ENCODE measurements at regions of chr5 and their contacts with region 1.

Region 1: DNA sequence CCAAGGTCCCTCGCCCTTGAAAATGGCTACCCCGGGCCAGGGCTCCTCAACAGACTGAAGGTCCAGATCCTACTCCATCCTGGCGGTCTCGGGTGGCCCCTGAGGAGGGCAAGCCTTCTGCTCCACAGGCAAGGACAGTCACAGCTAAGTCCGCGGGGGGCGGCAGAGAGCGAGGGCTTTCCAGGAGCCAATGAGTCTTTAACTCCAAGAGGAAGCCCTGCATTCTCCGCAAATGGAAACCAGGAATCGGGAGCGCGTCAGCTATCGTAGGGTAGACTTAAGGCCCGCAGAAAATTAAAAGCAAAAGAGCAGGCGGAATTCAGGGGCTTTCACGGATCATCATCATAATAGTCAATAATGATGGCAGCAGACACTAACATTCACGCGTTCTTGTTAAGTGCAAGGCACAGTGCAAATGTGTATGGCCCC is 87.8 kb upstream of the TNFAIP8 start:
- DNase-seq: peak; percentile 62
- ATAC-seq: peak; percentile 65
- H3K4me3 Mint-ChIP-seq: peak overlapping the region; percentile 95
- H3K27ac Mint-ChIP-seq: peak overlapping the region; percentile 95
- H3K4me1 Mint-ChIP-seq: peaks cover 50% of the 10 kb centered on the region
- H3K27me3 Mint-ChIP-seq: no peaks in the 10 kb centered on the region
- CTCF ChIP-seq: no peak

Region 2: GRCh38 chr5:119282628-119283027 is 14.7 kb after region 1 on chr5:
- CTCF ChIA-PET with region 1: no interaction called
- POLR2A ChIA-PET with region 1: interaction called, 54 read pairs
- intact Hi-C with region 1: loop called (anchors 2 kb)
- DNase-seq: no peak
- ATAC-seq: no peak
- H3K4me3 Mint-ChIP-seq: no peak overlapping the region
- H3K27ac Mint-ChIP-seq: peak overlapping the region; percentile 51
- H3K4me1 Mint-ChIP-seq: peaks cover 100% of the 10 kb centered on the region
- H3K27me3 Mint-ChIP-seq: no peaks in the 10 kb centered on the region
- CTCF ChIP-seq: no peak

Region 3: DNA sequence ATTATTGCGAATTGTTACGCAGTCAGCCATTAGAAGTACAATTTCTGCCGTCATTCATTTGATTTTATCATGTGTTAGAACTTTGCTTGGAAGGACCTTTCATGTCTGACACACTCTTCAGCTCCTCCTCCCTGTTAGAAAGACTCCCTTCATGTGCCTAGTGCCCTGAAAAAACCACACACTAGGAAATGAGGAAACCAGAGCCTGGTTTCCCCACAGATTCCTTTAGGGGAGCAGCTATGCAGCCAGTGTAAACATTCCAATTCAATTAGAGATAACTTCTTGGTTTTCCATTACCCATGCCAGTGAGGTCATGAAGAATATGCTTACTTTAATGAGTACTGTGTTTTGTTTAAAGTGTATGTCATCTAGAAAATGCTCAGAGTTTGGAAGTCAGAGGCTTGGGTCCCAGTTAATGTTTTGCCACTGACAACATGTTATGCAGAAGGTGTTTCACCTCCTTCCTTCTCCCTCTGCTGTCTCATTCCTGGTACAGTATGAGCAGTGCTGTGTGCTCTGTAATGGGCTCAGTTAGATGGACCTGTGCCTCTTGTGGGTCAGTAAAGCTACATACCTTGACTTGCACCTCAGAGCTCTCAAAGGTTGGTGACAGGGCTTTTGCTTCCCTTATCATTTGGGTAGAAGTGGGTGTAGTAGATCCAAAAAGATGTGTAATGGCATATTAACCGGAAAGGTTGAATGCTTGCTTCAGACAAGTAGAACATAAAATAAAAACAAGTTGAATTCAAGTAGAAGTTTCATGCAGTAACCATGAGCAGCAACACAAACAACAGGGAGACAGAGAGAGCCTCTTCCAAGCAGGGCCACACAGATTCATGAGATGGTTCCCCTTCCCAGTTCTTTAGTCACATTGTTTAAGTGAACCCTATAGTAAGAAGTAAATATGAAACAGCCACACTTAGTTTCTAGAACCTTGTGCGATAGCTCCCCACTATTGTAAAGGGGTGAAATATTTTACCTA is 35.2 kb after region 1 on chr5:
- CTCF ChIA-PET with region 1: no interaction called
- POLR2A ChIA-PET with region 1: no interaction called
- intact Hi-C with region 1: no loop called
- DNase-seq: no peak
- ATAC-seq: no peak
- H3K4me3 Mint-ChIP-seq: peak overlapping the region; percentile 16
- H3K27ac Mint-ChIP-seq: peak overlapping the region; percentile 86
- H3K4me1 Mint-ChIP-seq: peaks cover 95% of the 10 kb centered on the region
- H3K27me3 Mint-ChIP-seq: no peaks in the 10 kb centered on the region
- CTCF ChIP-seq: no peak

Region 4: DNA sequence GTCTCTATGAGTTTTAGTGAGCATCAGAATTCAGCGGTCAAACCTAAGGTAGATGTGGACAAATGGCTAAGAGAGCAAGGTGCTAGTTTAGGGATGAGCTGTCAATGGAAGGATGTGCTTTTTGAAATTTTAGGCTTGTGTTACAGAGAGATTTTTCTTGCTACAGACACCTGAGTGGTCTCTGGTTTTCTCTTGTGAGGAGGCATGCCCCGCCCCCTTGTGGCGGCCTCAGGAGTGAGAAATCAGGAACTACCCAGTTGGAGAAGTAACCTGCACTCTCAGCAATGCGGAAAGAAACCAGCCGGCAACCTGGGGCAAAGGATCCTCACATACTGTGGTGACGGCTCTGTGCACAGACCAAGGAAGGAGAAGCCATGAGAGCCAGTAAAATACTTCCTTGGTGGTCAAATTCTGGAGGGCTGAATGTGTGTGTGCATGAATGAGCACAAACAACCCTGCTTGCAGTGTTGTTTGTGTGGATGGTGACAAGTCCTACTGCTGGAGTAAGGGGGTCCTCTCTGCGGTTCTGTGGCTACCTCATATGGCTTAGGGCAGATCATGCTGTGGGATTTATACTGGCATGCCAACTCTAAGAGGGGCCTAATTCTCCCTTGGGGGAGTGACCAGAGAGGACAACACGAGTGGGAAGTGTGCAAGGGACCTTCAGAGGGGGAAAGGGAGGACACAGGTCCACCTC is 167.6 kb after region 1 on chr5:
- CTCF ChIA-PET with region 1: no interaction called
- POLR2A ChIA-PET with region 1: interaction called, 4 read pairs
- intact Hi-C with region 1: loop called (anchors 1 kb)
- DNase-seq: peak; percentile 73
- ATAC-seq: peak; percentile 93
- H3K4me3 Mint-ChIP-seq: peak overlapping the region; percentile 29
- H3K27ac Mint-ChIP-seq: peak overlapping the region; percentile 19
- H3K4me1 Mint-ChIP-seq: peaks cover 32% of the 10 kb centered on the region
- H3K27me3 Mint-ChIP-seq: no peaks in the 10 kb centered on the region
- CTCF ChIP-seq: peak; percentile 81

Region 5: DNA sequence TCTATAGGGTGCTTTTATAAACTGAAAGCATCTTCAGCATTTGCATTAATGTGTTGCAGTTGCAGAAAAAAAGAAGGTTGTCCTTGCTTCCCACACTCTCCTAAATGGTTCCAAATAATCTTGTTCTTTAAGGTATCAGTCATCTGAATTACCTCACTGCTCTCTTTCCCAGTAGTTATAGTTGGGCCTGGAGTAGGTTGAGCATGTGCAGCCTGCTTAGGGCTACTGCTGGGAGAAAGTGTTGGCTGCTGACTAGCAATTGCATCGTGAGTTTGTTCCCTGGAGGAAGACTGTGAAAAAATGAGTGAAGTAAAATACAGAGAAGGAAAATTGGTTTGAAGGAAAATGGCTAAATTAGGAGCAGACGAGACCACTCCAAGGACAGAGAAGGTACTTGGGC is 1270.7 kb after region 1 on chr5:
- CTCF ChIA-PET with region 1: no interaction called
- POLR2A ChIA-PET with region 1: no interaction called
- intact Hi-C with region 1: no loop called
- DNase-seq: no peak
- ATAC-seq: no peak
- H3K4me3 Mint-ChIP-seq: no peak overlapping the region
- H3K27ac Mint-ChIP-seq: no peak overlapping the region
- H3K4me1 Mint-ChIP-seq: no peaks in the 10 kb centered on the region
- H3K27me3 Mint-ChIP-seq: no peaks in the 10 kb centered on the region
- CTCF ChIP-seq: no peak

Region 6: GRCh38 chr5:120734033-120734432 is 1466.1 kb after region 1 on chr5:
- CTCF ChIA-PET with region 1: no interaction called
- POLR2A ChIA-PET with region 1: no interaction called
- intact Hi-C with region 1: no loop called
- DNase-seq: no peak
- ATAC-seq: no peak
- H3K4me3 Mint-ChIP-seq: no peak overlapping the region
- H3K27ac Mint-ChIP-seq: no peak overlapping the region
- H3K4me1 Mint-ChIP-seq: no peaks in the 10 kb centered on the region
- H3K27me3 Mint-ChIP-seq: no peaks in the 10 kb centered on the region
- CTCF ChIP-seq: no peak

Measured in activated B cell treated with CpG ODN at 0.5 μM for 24 hours (primary cell).